Activated CD4-positive, alpha-beta T cell treated with anti-CD3 and anti-CD28 coated beads for 36 hours (primary cell): ENCODE measurements at regions of chr11 and their contacts with region 1.

Region 1: GRCh38 chr11:2992234-2992996 is at the start of gene NAP1L4:
- DNase-seq: peak; percentile 98
- ATAC-seq: peak; percentile 76
- H3K4me3 Mint-ChIP-seq: peak within 1 kb of the TSS; percentile 100
- H3K27ac Mint-ChIP-seq: peak within 1 kb of the TSS; percentile 100
- H3K4me1 Mint-ChIP-seq: peaks cover 30% of the 10 kb centered on the region
- H3K27me3 Mint-ChIP-seq: no peaks in the 10 kb centered on the region
- total RNA-seq, gene NAP1L4: 241 to 246 TPM

Region 2: GRCh38 chr11:2269601-2270321 is 722.7 kb before region 1 on chr11:
- CTCF ChIA-PET with region 1: no interaction called
- POLR2A ChIA-PET with region 1: no interaction called
- intact Hi-C with region 1: loop called in 1 of 2 experiments (anchors 2 kb)
- DNase-seq: peak; percentile 73
- ATAC-seq: peak; percentile 20
- H3K4me3 Mint-ChIP-seq: peak overlapping the region; percentile 52
- H3K27ac Mint-ChIP-seq: no peak overlapping the region
- H3K4me1 Mint-ChIP-seq: peaks cover 22% of the 10 kb centered on the region
- H3K27me3 Mint-ChIP-seq: peaks cover 29% of the 10 kb centered on the region

Region 3: GRCh38 chr11:2452321-2453012 is 539.9 kb before region 1 on chr11:
- CTCF ChIA-PET with region 1: no interaction called
- POLR2A ChIA-PET with region 1: no interaction called
- intact Hi-C with region 1: no loop called
- DNase-seq: no peak
- ATAC-seq: no peak
- H3K4me3 Mint-ChIP-seq: no peak overlapping the region
- H3K27ac Mint-ChIP-seq: no peak overlapping the region
- H3K4me1 Mint-ChIP-seq: peaks cover 6% of the 10 kb centered on the region
- H3K27me3 Mint-ChIP-seq: no peaks in the 10 kb centered on the region

Region 4: DNA sequence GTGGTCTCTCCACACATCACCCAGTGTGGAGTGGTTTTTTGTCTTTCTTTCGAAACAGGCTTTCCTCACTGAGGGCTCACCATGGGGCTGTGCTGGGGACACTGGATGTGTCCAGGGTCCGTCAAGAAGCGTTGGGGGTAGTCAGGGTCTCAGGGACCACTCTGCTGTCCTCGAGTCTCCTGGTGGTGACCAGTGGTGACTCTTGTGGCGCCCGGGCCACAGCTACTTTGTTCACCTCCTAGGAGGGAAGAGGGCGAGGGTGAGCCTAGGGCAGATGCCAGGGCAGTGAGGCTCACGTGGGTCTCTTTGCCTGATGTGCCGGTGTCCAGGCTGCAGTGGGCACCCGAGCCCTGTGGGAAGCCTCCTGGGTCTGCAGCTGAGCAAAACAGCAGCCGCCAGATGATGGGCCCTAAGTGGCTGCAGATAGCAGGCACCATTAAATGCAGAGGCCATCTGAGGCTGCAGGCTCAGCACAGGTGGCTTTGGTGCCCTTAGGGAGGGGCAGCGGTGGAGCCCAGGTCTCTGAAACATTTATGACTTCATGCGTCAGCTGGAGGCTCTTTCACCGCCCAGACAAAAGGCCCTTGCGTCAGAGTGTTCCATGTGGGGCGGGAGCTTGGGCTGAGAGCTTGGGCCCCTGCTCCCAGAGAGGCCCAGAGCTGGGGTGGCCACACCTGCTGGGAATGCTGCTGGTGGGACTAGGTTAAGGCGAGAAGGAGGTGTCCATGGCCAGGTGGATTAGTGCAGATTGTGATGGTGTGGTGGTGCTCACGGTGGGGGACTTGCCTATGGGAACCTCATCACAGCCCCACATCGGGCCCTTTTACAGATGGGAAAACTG is 518.1 kb before region 1 on chr11:
- CTCF ChIA-PET with region 1: no interaction called
- POLR2A ChIA-PET with region 1: no interaction called
- intact Hi-C with region 1: no loop called
- DNase-seq: no peak
- ATAC-seq: no peak
- H3K4me3 Mint-ChIP-seq: no peak overlapping the region
- H3K27ac Mint-ChIP-seq: no peak overlapping the region
- H3K4me1 Mint-ChIP-seq: peaks cover 14% of the 10 kb centered on the region
- H3K27me3 Mint-ChIP-seq: no peaks in the 10 kb centered on the region

Region 5: DNA sequence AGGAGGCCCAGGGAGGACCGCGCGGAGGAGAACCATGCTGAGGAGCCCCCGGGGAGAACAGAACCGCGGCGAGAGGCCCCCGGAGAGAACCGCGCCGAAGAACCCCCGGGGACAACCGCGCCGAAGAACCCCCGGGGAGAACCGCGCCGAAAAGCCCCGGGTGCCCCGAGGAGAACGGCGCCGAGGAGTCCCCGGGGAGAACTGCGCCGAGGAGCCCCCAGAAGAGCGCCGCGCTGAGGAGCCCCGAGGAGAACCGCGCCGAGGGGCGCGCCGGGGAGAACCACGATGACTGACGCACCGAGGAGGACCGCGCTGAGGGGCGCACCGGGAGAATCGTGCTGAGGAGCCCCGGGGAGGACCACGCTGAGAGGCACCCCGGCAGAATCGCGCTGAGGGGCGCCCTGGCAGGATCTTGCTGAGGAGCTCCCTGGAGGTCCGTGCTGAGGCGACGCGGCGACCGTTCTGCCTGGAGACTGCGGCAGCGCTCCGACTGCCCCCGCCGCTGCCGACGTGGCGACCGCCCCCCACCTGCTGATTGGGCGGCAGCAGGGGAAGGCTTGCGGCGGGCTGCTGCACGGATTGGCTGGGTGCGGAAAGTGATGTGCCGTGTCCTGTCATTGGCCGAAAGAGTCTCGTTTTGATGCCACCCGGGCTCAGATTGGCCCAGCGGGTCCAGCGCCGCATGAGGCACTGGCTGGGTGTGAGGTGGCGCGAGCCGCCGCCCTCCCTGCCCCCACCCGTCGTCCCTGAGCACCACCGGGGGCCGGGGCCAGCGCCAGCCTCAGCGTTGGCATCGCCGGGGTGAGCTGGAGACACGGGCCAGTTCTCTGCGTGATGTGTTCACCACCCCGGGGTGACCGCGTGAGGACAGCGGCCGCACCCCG is 292.6 kb before region 1 on chr11 and contains the start of gene KCNQ1OT1:
- CTCF ChIA-PET with region 1: no interaction called
- POLR2A ChIA-PET with region 1: no interaction called
- intact Hi-C with region 1: loop called in 1 of 2 experiments (anchors 1 kb)
- DNase-seq: peak; percentile 91
- ATAC-seq: peak; percentile 98
- H3K4me3 Mint-ChIP-seq: peak within 1 kb of the TSS; percentile 79
- H3K27ac Mint-ChIP-seq: peak within 1 kb of the TSS; percentile 28
- H3K4me1 Mint-ChIP-seq: peaks cover 8% of the 10 kb centered on the region
- H3K27me3 Mint-ChIP-seq: no peaks in the 10 kb centered on the region
- total RNA-seq, gene KCNQ1OT1: 0.16 TPM

Region 6: DNA sequence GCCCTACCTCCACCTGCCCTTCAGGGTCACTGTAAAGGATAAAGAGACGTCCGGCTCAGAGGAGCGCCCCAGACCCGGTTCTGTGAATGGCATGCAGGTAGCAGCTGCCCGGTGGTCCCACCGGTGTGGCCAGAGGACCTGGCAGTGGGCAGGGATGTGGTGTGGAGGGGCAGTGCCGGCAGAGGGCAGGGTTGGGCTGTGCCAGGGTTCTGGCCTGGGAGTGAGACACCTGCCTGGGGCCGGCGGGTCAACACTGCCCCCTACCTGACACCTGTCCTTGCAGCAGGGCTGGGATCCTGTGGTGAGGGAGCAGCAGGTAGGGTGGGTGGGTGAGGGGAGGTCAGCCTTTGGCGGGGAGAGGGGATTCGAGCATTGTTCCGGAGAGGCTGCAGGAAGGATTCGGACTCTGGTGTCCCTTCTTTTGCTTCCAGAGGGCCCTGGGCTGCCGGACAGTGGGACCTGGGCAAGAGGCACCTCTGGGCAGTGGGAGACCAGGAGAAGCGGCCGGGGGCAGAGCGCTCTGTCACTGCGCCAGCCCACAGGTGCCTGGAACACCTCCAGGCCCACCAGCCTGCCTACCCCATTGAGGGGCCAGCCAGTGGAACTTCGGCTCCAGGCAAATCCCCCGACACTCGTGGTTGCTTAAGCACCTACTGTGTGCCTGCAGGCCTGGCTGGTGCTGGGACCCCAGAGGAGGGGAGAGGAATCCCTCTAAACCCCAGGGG is 61.5 kb before region 1 on chr11:
- CTCF ChIA-PET with region 1: no interaction called
- POLR2A ChIA-PET with region 1: interaction called, 4 read pairs
- intact Hi-C with region 1: loop called in 1 of 2 experiments (anchors 2 kb)
- DNase-seq: peak; percentile 80
- ATAC-seq: peak; percentile 28
- H3K4me3 Mint-ChIP-seq: peak overlapping the region; percentile 61
- H3K27ac Mint-ChIP-seq: peak overlapping the region; percentile 47
- H3K4me1 Mint-ChIP-seq: peaks cover 27% of the 10 kb centered on the region
- H3K27me3 Mint-ChIP-seq: peaks cover 19% of the 10 kb centered on the region

Region 7: GRCh38 chr11:2975594-2975993 is 16.8 kb before region 1 on chr11:
- CTCF ChIA-PET with region 1: interaction called, 29 read pairs
- POLR2A ChIA-PET with region 1: interaction called, 10 read pairs
- intact Hi-C with region 1: loop called in 1 of 2 experiments (anchors 2 kb)
- DNase-seq: peak; percentile 67
- ATAC-seq: peak; percentile 95
- H3K4me3 Mint-ChIP-seq: no peak overlapping the region
- H3K27ac Mint-ChIP-seq: no peak overlapping the region
- H3K4me1 Mint-ChIP-seq: peaks cover 27% of the 10 kb centered on the region
- H3K27me3 Mint-ChIP-seq: no peaks in the 10 kb centered on the region

Region 8: DNA sequence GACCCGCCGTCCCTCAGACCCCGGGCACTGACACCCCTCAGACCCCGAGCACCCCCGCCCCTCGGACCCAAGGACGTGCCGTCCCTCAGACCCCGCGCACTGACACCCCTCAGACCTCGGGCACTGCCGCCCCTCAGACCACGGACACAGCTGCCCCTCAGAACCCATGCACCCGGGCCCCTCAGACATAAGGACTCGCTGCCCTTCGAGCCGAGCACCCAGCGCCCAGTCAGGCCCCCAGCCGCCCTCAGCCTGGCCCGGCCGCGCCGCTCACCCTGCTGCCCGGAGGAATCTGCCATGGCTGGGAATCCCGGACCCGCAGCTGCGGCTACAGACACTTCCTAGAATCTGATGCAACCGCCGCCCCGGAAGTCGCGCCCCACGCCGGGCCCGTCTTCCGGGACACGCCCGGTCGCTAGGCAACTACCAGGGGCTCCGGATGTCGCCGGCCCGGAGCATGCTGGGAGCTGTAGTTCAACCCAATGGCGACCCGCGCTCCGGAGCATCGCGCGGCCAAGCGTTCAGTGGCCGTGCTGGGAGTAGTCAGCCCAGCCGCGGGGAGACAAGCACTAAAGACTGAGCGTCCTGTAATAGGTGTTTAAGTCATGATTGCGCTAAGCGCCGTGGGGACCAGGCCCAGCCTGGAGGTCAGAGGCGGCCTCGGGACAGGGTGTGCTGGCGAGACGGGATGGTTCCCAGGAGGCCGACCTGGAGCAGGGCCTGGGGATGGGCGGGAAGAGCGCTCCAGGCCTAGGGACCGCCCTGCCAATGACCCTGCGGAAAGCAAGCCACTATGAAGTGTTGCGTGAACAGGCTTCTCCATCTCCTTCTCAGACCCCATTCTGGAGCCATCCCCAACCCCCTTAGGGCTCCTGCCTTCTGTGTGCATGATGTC is 64.9 kb after region 1 on chr11 and contains the start of gene CARS1:
- CTCF ChIA-PET with region 1: no interaction called
- POLR2A ChIA-PET with region 1: no interaction called
- intact Hi-C with region 1: loop called (anchors 1 kb)
- DNase-seq: peak; percentile 98
- ATAC-seq: peak; percentile 99
- H3K4me3 Mint-ChIP-seq: peak within 1 kb of the TSS; percentile 89
- H3K27ac Mint-ChIP-seq: peak within 1 kb of the TSS; percentile 87
- H3K4me1 Mint-ChIP-seq: peaks cover 29% of the 10 kb centered on the region
- H3K27me3 Mint-ChIP-seq: no peaks in the 10 kb centered on the region
- total RNA-seq, gene CARS1: 94.1 to 126 TPM

Region 9: DNA sequence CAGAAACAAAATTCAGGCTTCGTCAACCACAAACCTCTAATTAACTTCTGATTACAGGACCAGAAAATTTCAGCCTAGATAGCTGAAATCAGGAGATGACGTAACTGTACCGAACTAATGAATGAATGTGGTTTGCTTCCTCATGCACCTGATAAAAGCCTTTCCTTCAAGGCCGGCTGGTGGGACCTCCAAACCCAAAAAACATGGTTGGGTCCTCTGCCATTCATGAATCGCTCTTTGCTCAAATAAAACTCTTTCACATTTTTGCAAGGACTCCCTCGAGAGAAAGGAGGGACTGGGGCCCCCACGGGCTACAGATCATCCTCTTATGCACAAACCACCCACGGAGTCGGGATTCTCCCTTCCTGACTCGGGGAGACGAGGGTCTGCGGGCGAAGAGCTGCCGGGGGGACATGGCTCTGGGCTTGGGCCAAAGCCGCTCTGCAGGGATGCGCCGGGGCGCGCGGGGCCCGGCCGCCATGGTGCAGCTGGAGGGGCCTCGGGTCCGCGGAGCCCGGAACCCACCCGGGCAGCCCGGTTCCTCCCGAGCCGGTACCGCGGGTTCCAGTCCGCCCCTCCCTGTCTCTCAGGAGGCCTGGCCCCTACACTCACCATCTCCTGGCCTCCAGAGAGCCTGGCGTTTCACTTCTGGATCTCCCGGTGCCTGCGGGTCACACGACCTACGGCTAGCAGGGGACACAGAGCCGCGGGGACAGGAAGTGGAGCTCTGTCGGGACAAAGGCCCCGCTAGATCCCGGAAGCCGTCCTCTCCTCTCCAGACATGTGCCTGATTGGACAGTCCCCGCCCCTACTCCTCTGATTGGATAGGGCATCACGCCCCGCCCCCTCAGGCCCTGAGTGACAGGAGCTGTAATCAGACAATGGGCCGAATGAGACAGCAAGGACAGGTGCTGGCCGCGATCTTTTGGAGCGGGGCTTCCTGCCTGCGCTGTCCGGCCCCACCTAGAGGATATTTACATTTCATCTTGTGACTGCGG is 386.3 kb after region 1 on chr11 and contains the start of gene ZNF195:
- CTCF ChIA-PET with region 1: no interaction called
- POLR2A ChIA-PET with region 1: interaction called, 3 read pairs
- intact Hi-C with region 1: loop called in 1 of 2 experiments (anchors 1 kb)
- DNase-seq: peak; percentile 99
- ATAC-seq: peak; percentile 100
- H3K4me3 Mint-ChIP-seq: peak within 1 kb of the TSS; percentile 91
- H3K27ac Mint-ChIP-seq: peak within 1 kb of the TSS; percentile 93
- H3K4me1 Mint-ChIP-seq: peaks cover 47% of the 10 kb centered on the region
- H3K27me3 Mint-ChIP-seq: no peaks in the 10 kb centered on the region
- total RNA-seq, gene ZNF195: 32.6 to 36.2 TPM